WTC11 (cell line): ENCODE measurements at regions of chr10 and their contacts with region 1.

Region 1: GRCh38 chr10:101441541-101442455 is 87.8 kb downstream of the BTRC start:
- DNase-seq: peak; percentile 17
- ATAC-seq: peak; percentile 98
- H3K4me3 Mint-ChIP-seq: no peak overlapping the region
- H3K27ac Mint-ChIP-seq: no peak overlapping the region
- H3K4me1 Mint-ChIP-seq: peaks cover 19% of the 10 kb centered on the region
- H3K27me3 Mint-ChIP-seq: no peaks in the 10 kb centered on the region
- CTCF ChIP-seq: no peak

Region 2: GRCh38 chr10:101297901-101298486 is 143.8 kb before region 1 on chr10:
- CTCF ChIA-PET with region 1: interaction called, 118 read pairs
- POLR2A ChIA-PET with region 1: no interaction called
- DNase-seq: peak; percentile 92
- ATAC-seq: peak; percentile 81
- H3K4me3 Mint-ChIP-seq: no peak overlapping the region
- H3K27ac Mint-ChIP-seq: no peak overlapping the region
- H3K4me1 Mint-ChIP-seq: peaks cover 10% of the 10 kb centered on the region
- H3K27me3 Mint-ChIP-seq: peaks cover 69% of the 10 kb centered on the region
- CTCF ChIP-seq: peak; percentile 86

Region 3: GRCh38 chr10:101311185-101312066 is 130.4 kb before region 1 on chr10:
- CTCF ChIA-PET with region 1: interaction called, 118 read pairs
- POLR2A ChIA-PET with region 1: no interaction called
- DNase-seq: peak; percentile 74
- ATAC-seq: peak; percentile 85
- H3K4me3 Mint-ChIP-seq: peak overlapping the region; percentile 52
- H3K27ac Mint-ChIP-seq: peak overlapping the region; percentile 50; the same call in 1 of the 2 replicates
- H3K4me1 Mint-ChIP-seq: peaks cover 23% of the 10 kb centered on the region
- H3K27me3 Mint-ChIP-seq: peaks cover 6% of the 10 kb centered on the region; the same call in 1 of the 2 replicates
- CTCF ChIP-seq: no peak

Region 4: DNA sequence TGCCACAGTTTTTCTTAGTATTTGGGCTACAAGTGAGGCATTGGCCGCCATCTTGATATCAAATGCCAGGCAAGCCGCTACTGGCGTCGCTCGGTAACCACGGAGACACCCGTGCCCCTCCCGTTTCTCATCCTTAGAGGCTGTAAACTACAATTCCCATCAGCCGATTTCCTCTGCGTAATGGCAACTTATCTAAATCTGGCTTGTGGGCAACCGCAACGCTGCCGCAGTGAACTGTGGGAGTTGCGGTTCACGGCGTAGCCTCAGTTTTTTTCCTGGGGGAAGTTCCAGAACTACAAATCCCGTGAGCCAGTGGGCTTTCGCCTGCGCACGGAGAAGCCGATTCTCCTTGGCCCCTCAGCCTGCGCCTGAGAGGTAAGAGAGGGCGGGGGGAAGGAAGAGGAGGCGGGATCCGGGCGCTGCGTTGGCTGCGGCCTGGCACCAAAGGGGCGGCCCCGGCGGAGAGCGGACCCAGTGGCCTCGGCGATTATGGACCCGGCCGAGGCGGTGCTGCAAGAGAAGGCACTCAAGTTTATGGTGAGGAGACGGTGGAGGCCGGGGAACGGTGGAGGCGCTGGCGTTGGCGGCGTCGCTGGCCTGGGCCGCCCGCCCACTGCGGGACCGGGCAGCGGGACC is 88.0 kb before region 1 on chr10 and contains the start of gene BTRC:
- CTCF ChIA-PET with region 1: interaction called, 11 read pairs
- POLR2A ChIA-PET with region 1: no interaction called
- DNase-seq: peak; percentile 97
- ATAC-seq: peak; percentile 96
- H3K4me3 Mint-ChIP-seq: peak within 1 kb of the TSS; percentile 98
- H3K27ac Mint-ChIP-seq: peak within 1 kb of the TSS; percentile 97
- H3K4me1 Mint-ChIP-seq: peaks cover 12% of the 10 kb centered on the region
- H3K27me3 Mint-ChIP-seq: peaks cover 8% of the 10 kb centered on the region
- CTCF ChIP-seq: no peak
- total RNA-seq, gene BTRC: 20.6 to 22.4 TPM (median 22.2 TPM) in 3 replicates